GM12878 (cell line): ENCODE measurements at regions of chr9 and their contacts with region 1.

Region 1: GRCh38 chr9:5437254-5438216 is at the start of gene PLGRKT:
- DNase-seq: peak; percentile 81
- ATAC-seq: peak; percentile 88
- H3K4me3 ChIP-seq: peak within 1 kb of the TSS; percentile 86
- H3K27ac ChIP-seq: peak within 1 kb of the TSS; percentile 96
- H3K4me1 ChIP-seq: peaks cover 7% of the 10 kb centered on the region
- H3K27me3 ChIP-seq: no peaks in the 10 kb centered on the region
- CTCF ChIP-seq: peak; percentile 17 to 31 (median 17); a peak in 3 of 6 replicates
- EP300 ChIP-seq: peak in 1 of 2 experiments; percentile 37; a peak in 1 of 4 replicates
- POLR2A ChIP-seq: peak; percentile 95
- RAD21 ChIP-seq: no peak
- polyA plus RNA-seq, gene PLGRKT: 62.2 to 64.4 TPM

Region 2: GRCh38 chr9:4740638-4741364 is 696.7 kb before region 1 on chr9 and contains the start of gene AK3:
- CTCF ChIA-PET with region 1: no interaction called
- POLR2A ChIA-PET with region 1: no interaction called
- RAD21 ChIA-PET with region 1: interaction called, 3 read pairs
- SMC1A ChIA-PET with region 1: no interaction called
- in situ Hi-C with region 1: no loop called
- intact Hi-C with region 1: loop called (anchors 5 kb)
- DNase-seq: no peak
- ATAC-seq: peak; percentile 94
- H3K4me3 ChIP-seq: peak within 1 kb of the TSS; percentile 92
- H3K27ac ChIP-seq: peak within 1 kb of the TSS; percentile 80
- H3K4me1 ChIP-seq: peaks cover 8% of the 10 kb centered on the region
- H3K27me3 ChIP-seq: no peaks in the 10 kb centered on the region
- CTCF ChIP-seq: peak in 2 of 3 experiments; percentile 9 to 54; a peak in 3 of 6 replicates
- EP300 ChIP-seq: no peak
- POLR2A ChIP-seq: peak; percentile 92
- RAD21 ChIP-seq: peak; percentile 34; the same call in 1 of the 2 replicates
- polyA plus RNA-seq, gene AK3: 14.2 to 26.2 TPM

Region 3: DNA sequence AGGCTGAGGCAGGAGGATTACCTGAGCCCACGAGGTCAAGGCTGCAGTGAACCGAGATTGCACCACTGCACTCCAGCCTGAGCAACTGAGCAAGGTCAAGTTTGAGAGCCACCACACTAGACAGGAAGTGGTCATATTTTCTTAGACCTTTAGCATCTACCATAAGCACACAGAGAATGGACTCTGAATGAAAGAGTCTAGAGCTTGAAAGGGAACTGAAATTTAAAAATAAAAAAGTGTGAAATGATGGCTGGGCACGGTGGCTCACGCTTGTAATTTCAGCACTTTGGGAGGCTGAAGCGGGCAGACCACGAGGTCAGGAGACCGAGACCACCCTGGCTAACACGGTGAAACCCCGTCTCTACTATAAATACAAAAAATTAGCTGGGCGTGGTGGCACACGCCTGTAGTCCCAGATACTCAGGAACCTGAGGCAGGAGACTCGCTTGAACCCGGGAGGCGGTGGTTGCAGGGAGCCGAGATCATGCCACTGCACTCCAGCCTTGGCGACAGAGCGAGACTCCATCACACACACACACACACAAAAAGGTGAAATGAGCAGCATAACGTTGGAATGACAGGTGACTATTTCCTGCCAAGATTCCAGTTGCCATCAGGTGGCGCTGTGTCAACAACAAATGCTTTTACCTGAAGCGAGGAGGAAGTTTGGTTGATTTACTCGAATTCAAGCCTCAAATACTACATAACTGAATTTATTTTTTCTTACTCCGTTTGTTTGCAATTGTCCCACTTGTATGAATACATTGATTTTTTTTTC is 675.2 kb before region 1 on chr9:
- CTCF ChIA-PET with region 1: interaction called, 19 read pairs
- POLR2A ChIA-PET with region 1: no interaction called
- RAD21 ChIA-PET with region 1: interaction called, 14 read pairs
- SMC1A ChIA-PET with region 1: interaction called, 13 read pairs
- in situ Hi-C with region 1: loop called (anchors 5 kb)
- intact Hi-C with region 1: no loop called
- DNase-seq: peak; percentile 81
- ATAC-seq: peak; percentile 92
- H3K4me3 ChIP-seq: peak overlapping the region; percentile 56
- H3K27ac ChIP-seq: peak overlapping the region; percentile 60
- H3K4me1 ChIP-seq: peaks cover 18% of the 10 kb centered on the region
- H3K27me3 ChIP-seq: no peaks in the 10 kb centered on the region
- CTCF ChIP-seq: peak; percentile 71 to 84 (median 84); a peak in 5 of 6 replicates
- EP300 ChIP-seq: peak in 1 of 2 experiments; percentile 41; a peak in 1 of 4 replicates
- POLR2A ChIP-seq: no peak
- RAD21 ChIP-seq: peak; percentile 96

Region 4: DNA sequence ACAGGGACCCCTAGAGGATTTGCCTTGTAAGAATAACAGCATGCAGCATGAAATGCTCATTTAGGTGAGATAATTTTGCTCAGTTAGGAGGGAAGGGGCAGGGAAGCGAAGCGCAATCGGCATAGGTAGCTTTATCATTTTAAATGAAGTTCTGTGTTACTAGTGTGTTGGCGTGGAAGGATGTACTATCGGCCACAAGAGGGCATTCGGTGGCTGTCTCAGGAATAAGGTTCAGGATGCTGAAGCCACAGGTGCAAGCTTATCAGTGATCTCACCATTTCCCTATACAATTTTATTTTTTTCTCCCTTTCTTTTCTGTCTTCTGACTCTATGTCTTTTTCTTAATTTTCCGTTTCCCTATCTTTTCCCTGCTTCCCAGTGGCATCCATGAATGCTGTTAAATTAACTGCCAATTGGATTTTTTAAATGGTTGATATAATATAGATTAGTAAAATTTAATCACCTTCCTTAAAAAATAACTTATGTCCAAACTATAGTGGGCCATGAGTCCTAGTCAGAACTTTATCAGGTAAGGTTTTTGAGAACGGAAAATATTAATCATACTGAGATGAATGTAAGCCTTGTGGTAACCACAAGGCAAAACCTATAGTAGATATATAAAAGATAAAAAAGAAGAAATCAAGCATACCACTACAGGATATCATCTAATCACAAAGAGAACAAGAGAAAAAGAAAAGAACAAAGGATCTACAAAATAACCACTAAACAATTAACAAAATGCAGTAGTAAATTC is 250.9 kb before region 1 on chr9:
- CTCF ChIA-PET with region 1: interaction called, 6 read pairs
- POLR2A ChIA-PET with region 1: interaction called, 3 read pairs
- RAD21 ChIA-PET with region 1: interaction called, 9 read pairs
- SMC1A ChIA-PET with region 1: interaction called, 10 read pairs
- in situ Hi-C with region 1: no loop called
- intact Hi-C with region 1: no loop called
- DNase-seq: no peak
- ATAC-seq: peak; percentile 46
- H3K4me3 ChIP-seq: no peak overlapping the region
- H3K27ac ChIP-seq: no peak overlapping the region
- H3K4me1 ChIP-seq: no peaks in the 10 kb centered on the region
- H3K27me3 ChIP-seq: no peaks in the 10 kb centered on the region
- CTCF ChIP-seq: peak in 2 of 3 experiments; percentile 19 to 37; a peak in 2 of 6 replicates
- EP300 ChIP-seq: no peak
- POLR2A ChIP-seq: no peak
- RAD21 ChIP-seq: peak; percentile 37

Region 5: DNA sequence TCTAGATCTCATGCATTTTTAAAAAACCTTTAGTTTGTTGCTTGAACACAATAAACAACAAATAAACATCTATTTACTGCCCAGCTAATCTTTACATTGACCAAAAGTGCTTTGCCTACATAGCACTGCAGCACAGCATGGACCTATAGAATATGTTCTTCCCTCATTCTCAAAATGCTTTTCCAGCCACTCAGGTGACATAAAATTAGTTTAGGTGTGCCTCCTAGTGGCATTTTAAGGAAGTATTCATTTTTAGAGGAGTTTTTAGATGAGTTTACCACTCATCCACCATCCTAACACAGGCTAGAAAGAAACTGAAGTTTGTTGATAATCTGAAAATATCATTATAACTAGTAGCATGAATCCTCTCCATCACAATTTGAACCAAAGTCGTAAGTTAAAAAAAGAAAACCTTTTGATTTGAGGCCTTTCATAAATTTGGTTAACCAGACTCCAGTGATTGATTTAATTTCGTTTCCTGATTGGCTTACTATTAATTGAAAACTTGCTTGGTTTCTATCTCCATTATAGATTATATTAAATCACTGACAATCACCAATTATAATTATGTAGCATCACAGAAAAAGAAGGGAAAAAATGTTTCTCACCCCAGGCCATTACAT is 12.4 kb before region 1 on chr9:
- CTCF ChIA-PET with region 1: interaction called, 37 read pairs
- POLR2A ChIA-PET with region 1: no interaction called
- RAD21 ChIA-PET with region 1: interaction called, 10 read pairs
- SMC1A ChIA-PET with region 1: interaction called, 14 read pairs
- in situ Hi-C with region 1: no loop called
- intact Hi-C with region 1: no loop called
- DNase-seq: peak; percentile 30
- ATAC-seq: peak; percentile 77
- H3K4me3 ChIP-seq: no peak overlapping the region
- H3K27ac ChIP-seq: no peak overlapping the region
- H3K4me1 ChIP-seq: no peaks in the 10 kb centered on the region
- H3K27me3 ChIP-seq: no peaks in the 10 kb centered on the region
- CTCF ChIP-seq: peak; percentile 45 to 61 (median 56); a peak in 5 of 6 replicates
- EP300 ChIP-seq: no peak
- POLR2A ChIP-seq: no peak
- RAD21 ChIP-seq: peak; percentile 78

Region 6: GRCh38 chr9:5459289-5459829 is 21.8 kb after region 1 on chr9:
- CTCF ChIA-PET with region 1: interaction called, 3 read pairs
- POLR2A ChIA-PET with region 1: interaction called, 13 read pairs
- RAD21 ChIA-PET with region 1: interaction called, 5 read pairs
- SMC1A ChIA-PET with region 1: interaction called, 17 read pairs
- in situ Hi-C with region 1: no loop called
- intact Hi-C with region 1: no loop called
- DNase-seq: no peak
- ATAC-seq: peak; percentile 55
- H3K4me3 ChIP-seq: peak overlapping the region; percentile 35
- H3K27ac ChIP-seq: peak overlapping the region; percentile 81
- H3K4me1 ChIP-seq: peaks cover 32% of the 10 kb centered on the region
- H3K27me3 ChIP-seq: no peaks in the 10 kb centered on the region
- CTCF ChIP-seq: no peak
- EP300 ChIP-seq: peak; percentile 69 to 84; a peak in 2 of 4 replicates
- POLR2A ChIP-seq: no peak
- RAD21 ChIP-seq: no peak

Region 7: GRCh38 chr9:5518171-5518936 is 80.8 kb after region 1 on chr9:
- CTCF ChIA-PET with region 1: interaction called, 5 read pairs
- POLR2A ChIA-PET with region 1: interaction called, 4 read pairs
- RAD21 ChIA-PET with region 1: interaction called, 13 read pairs
- SMC1A ChIA-PET with region 1: interaction called, 14 read pairs
- in situ Hi-C with region 1: no loop called
- intact Hi-C with region 1: no loop called
- DNase-seq: no peak
- ATAC-seq: peak; percentile 49
- H3K4me3 ChIP-seq: peak overlapping the region; percentile 35; the same call in 1 of the 2 replicates
- H3K27ac ChIP-seq: peak overlapping the region; percentile 58
- H3K4me1 ChIP-seq: peaks cover 47% of the 10 kb centered on the region
- H3K27me3 ChIP-seq: no peaks in the 10 kb centered on the region
- CTCF ChIP-seq: no peak
- EP300 ChIP-seq: no peak
- POLR2A ChIP-seq: no peak
- RAD21 ChIP-seq: 0 out of 2 replicates have a peak, but pooled peaks have one; percentile 17